PC-9 (cell line): ENCODE measurements at regions of chr7 and their contacts with region 1.

Region 1: GRCh38 chr7:47179812-47180515 is 401.9 kb downstream of the TNS3 start:
- DNase-seq: peak; percentile 44 to 75
- H3K4me3 ChIP-seq: no peak overlapping the region
- H3K27ac ChIP-seq: no peak overlapping the region
- H3K4me1 ChIP-seq: no peaks in the 10 kb centered on the region
- H3K27me3 ChIP-seq: peaks cover 8% of the 10 kb centered on the region; the same call in 1 of the 2 replicates
- CTCF ChIP-seq: peak; percentile 97

Region 2: GRCh38 chr7:45890902-45891461 is 1289.0 kb before region 1 on chr7:
- CTCF ChIA-PET with region 1: no interaction called
- POLR2A ChIA-PET with region 1: no interaction called
- intact Hi-C with region 1: loop called (anchors 1 kb)
- DNase-seq: peak in 1 of 2 experiments; percentile 50
- H3K4me3 ChIP-seq: no peak overlapping the region
- H3K27ac ChIP-seq: no peak overlapping the region
- H3K4me1 ChIP-seq: peaks cover 30% of the 10 kb centered on the region
- H3K27me3 ChIP-seq: no peaks in the 10 kb centered on the region
- CTCF ChIP-seq: peak; percentile 98

Region 3: DNA sequence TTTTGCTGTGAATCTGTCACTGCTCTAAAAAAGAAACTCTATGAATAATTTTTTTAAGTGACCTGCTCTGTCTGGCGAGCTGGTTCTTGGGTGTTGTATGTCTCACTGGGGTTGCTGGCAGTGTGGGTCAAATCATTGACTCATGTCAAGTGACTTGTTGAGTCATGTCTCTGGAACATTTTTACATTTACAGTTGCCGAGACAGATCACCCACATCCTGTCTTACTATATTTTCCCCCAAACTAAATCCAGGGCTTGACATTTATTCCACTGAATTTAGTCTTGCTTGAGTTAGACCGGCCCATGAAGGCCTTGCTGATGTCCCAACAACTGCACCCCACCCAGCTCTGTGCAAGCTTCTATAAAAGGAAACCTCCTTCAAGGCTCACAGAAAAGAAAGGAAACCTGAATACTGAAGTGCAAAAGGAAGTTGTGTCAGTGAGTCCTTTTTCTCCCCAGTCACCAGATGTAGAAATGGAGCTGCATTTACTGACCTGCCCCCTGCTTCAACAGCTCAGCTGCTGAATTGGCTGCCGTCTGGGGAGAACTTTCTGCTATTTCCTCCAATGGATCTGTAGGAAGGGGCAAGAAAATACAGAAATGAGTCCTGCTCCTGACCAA is 111.6 kb after region 1 on chr7:
- CTCF ChIA-PET with region 1: no interaction called
- POLR2A ChIA-PET with region 1: no interaction called
- intact Hi-C with region 1: no loop called
- DNase-seq: peak; percentile 44 to 76
- H3K4me3 ChIP-seq: no peak overlapping the region
- H3K27ac ChIP-seq: peak overlapping the region; percentile 58
- H3K4me1 ChIP-seq: peaks cover 32% of the 10 kb centered on the region
- H3K27me3 ChIP-seq: no peaks in the 10 kb centered on the region
- CTCF ChIP-seq: no peak